ENCODE measurements at regions of chr15 and their contacts with region 1.

Region 1: GRCh38 chr15:55917881-55918296 is 75.5 kb downstream of the NEDD4 start:
- DNase-seq: peak; percentile 89
- ATAC-seq: peak; percentile 98
- H3K4me3 ChIP-seq: no peak overlapping the region; the same call in 1 of the 2 replicates
- H3K27ac ChIP-seq: peak overlapping the region; percentile 70
- H3K4me1 ChIP-seq: peaks cover 36% of the 10 kb centered on the region
- H3K27me3 ChIP-seq: no peaks in the 10 kb centered on the region
- CTCF ChIP-seq: peak; percentile 71

Region 2: GRCh38 chr15:55649054-55649423 is 268.9 kb before region 1 on chr15:
- CTCF ChIA-PET with region 1: interaction called, 13 read pairs
- POLR2A ChIA-PET with region 1: no interaction called
- intact Hi-C with region 1: loop called (anchors 1 kb)
- DNase-seq: peak; percentile 57
- ATAC-seq: peak; percentile 77
- H3K4me3 ChIP-seq: no peak overlapping the region
- H3K27ac ChIP-seq: no peak overlapping the region
- H3K4me1 ChIP-seq: no peaks in the 10 kb centered on the region; the same call in 1 of the 2 replicates
- H3K27me3 ChIP-seq: no peaks in the 10 kb centered on the region
- CTCF ChIP-seq: no peak

Region 3: GRCh38 chr15:55884223-55884622 is 33.7 kb before region 1 on chr15:
- CTCF ChIA-PET with region 1: no interaction called
- POLR2A ChIA-PET with region 1: no interaction called
- intact Hi-C with region 1: no loop called
- DNase-seq: no peak
- ATAC-seq: no peak
- H3K4me3 ChIP-seq: no peak overlapping the region
- H3K27ac ChIP-seq: no peak overlapping the region
- H3K4me1 ChIP-seq: no peaks in the 10 kb centered on the region
- H3K27me3 ChIP-seq: no peaks in the 10 kb centered on the region
- CTCF ChIP-seq: no peak

Region 4: DNA sequence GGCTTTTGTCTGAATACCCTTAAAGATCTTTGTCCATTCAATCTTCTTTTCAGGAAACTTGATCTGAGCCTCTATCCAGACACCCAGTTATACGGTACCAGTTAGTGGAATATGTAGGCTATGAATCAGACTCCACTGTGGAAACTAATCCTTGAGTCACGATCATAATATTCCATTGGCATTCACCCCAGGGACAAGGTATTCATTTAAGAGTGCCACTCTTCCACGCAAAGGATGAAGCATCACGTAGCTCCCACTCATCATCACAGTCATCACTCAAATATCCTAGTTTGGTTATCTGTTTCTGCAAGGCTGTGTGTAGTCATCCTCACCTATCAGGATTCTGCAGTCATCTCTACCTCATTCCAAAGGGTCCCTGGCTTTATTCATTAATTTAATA is 10.1 kb before region 1 on chr15:
- CTCF ChIA-PET with region 1: interaction called, 7 read pairs
- POLR2A ChIA-PET with region 1: no interaction called
- intact Hi-C with region 1: loop called (anchors 1 kb)
- DNase-seq: peak; percentile 97
- ATAC-seq: peak; percentile 93
- H3K4me3 ChIP-seq: peak overlapping the region; percentile 36; the same call in 1 of the 2 replicates
- H3K27ac ChIP-seq: peak overlapping the region; percentile 90
- H3K4me1 ChIP-seq: peaks cover 37% of the 10 kb centered on the region
- H3K27me3 ChIP-seq: no peaks in the 10 kb centered on the region
- CTCF ChIP-seq: no peak

Region 5: GRCh38 chr15:56052395-56053045 is 134.6 kb after region 1 on chr15:
- CTCF ChIA-PET with region 1: no interaction called
- POLR2A ChIA-PET with region 1: no interaction called
- intact Hi-C with region 1: loop called (anchors 2 kb)
- DNase-seq: peak; percentile 67
- ATAC-seq: peak; percentile 64
- H3K4me3 ChIP-seq: no peak overlapping the region
- H3K27ac ChIP-seq: no peak overlapping the region
- H3K4me1 ChIP-seq: peaks cover 1% of the 10 kb centered on the region; the same call in 1 of the 2 replicates
- H3K27me3 ChIP-seq: no peaks in the 10 kb centered on the region
- CTCF ChIP-seq: peak; percentile 76

Region 6: DNA sequence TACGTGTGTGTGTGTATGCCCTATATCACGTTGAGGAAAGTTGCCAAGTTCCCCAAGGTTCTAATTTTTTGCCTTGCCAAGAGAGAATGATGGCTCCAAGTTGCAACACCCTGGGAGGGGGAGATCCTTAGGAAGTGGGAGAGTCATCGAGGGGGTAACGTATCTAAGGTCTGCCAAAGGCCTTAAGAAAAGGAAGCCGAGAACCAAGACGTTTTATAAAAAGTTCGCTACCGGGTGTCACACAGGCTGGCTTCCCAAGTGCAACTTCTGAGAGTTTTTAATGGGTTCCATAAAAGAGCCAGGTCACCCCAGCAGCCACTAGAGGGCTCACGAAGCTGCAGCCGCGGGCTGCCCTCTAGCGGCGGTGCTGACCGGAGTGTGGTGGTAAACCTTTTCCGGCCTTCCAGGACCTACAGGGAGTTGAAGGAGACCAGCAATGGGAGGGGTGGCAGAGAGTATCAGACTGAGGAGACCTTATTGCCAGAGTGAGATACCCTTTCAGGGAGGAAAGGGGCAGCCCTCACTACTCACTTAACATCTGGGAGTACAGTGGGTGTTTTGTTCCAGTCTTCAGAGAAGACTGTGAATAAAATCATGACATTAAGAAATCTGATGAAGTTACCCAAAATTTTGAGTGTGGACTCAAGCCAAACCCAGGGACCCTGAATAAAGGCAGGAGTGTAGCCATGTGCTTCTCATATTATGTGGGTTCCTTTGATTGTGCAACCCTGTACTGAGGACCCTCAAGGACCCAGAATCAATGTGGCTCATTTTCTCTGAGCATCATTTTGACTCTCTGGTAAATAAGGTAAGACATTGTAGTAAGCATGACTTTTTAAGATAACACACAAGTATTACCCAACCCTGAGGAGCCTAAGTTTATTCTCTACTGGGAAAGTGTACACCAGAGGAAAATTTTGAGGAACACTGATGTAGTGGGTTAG is 328.3 kb after region 1 on chr15:
- CTCF ChIA-PET with region 1: no interaction called
- POLR2A ChIA-PET with region 1: interaction called, 4 read pairs
- intact Hi-C with region 1: loop called (anchors 5 kb)
- DNase-seq: peak; percentile 91
- ATAC-seq: peak; percentile 67
- H3K4me3 ChIP-seq: peak overlapping the region; percentile 76
- H3K27ac ChIP-seq: peak overlapping the region; percentile 34; the same call in 1 of the 2 replicates
- H3K4me1 ChIP-seq: peaks cover 9% of the 10 kb centered on the region; the same call in 1 of the 2 replicates
- H3K27me3 ChIP-seq: no peaks in the 10 kb centered on the region
- CTCF ChIP-seq: peak; percentile 100